Activated naive CD4-positive, alpha-beta T cell treated with anti-CD3 and anti-CD28 coated beads for 36 hours (primary cell): ENCODE measurements at regions of chr16 and their contacts with region 1.

Region 1: GRCh38 chr16:4550591-4550990 is 5.5 kb upstream of the C16orf96 start:
- DNase-seq: no peak
- H3K4me3 Mint-ChIP-seq: no peak overlapping the region
- H3K27ac Mint-ChIP-seq: no peak overlapping the region
- H3K4me1 Mint-ChIP-seq: peaks cover 5% of the 10 kb centered on the region
- H3K27me3 Mint-ChIP-seq: no peaks in the 10 kb centered on the region

Region 2: GRCh38 chr16:4450926-4451619 is 99.5 kb before region 1 on chr16:
- CTCF ChIA-PET with region 1: no interaction called
- intact Hi-C with region 1: no loop called
- DNase-seq: no peak
- H3K4me3 Mint-ChIP-seq: no peak overlapping the region
- H3K27ac Mint-ChIP-seq: peak overlapping the region; percentile 41
- H3K4me1 Mint-ChIP-seq: no peaks in the 10 kb centered on the region
- H3K27me3 Mint-ChIP-seq: no peaks in the 10 kb centered on the region

Region 3: DNA sequence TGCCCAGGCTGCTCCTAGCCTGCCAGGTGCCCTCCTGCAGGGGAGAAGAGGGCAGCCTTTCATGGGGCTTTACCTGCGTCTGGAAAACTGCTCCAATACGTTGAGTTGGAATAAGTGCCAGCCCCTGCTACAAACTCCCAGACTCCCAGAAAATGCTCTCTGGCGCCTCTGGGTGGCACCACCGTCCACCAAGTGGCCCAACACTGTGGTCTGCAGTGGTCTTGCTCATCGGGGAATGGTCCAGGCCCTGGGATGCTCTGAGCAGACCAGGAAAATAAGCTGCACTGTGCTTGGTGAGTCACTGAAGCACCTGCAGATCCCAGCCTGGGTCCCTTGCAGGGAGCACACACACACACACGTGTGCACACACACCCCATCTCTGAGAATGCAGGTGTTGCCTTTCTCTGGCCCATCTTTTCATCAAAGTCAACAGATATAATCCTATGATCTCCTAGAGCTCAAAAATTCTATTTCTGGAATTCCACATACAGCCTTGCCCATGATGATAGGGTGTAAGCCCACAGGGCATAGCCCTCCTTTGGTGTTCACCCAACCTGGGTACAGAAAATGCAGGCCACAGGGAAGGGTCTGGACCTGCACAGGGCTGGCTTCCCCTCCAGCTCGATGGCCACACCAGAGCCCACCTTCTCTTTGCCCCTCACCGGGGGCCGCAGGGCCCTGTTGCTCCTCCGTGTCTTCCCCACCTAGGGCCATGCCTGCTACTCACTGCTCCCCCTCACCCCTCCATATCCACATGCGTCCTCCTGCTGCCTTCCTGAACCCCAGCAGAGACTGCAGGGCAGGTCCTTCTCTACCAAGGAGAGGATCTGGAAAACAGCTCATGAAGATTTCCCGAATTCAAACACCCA is 32.5 kb before region 1 on chr16:
- CTCF ChIA-PET with region 1: interaction called, 7 read pairs
- intact Hi-C with region 1: loop called (anchors 1 kb)
- DNase-seq: no peak
- H3K4me3 Mint-ChIP-seq: no peak overlapping the region
- H3K27ac Mint-ChIP-seq: no peak overlapping the region
- H3K4me1 Mint-ChIP-seq: peaks cover 30% of the 10 kb centered on the region
- H3K27me3 Mint-ChIP-seq: no peaks in the 10 kb centered on the region

Region 4: DNA sequence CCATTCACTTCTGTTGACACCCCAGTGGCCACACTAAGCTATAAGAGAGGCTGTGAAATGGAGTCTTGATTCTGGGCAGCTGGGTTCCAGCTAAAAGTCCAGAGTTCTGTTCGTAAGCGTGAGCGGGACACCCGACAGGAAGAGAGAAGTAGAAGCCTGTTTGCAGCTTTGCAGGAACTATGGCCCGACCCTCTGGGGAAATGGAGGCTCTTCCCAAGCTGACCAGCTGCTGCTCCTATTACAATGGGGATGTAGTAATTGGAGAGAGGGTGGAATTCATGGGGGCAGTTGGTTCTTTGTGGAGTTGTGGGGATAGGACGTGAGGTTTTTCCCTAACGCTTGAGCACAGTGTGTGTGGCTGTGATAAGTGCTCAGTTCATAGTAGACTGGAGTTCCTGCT is 35.7 kb after region 1 on chr16:
- CTCF ChIA-PET with region 1: interaction called, 10 read pairs
- intact Hi-C with region 1: no loop called
- DNase-seq: no peak
- H3K4me3 Mint-ChIP-seq: no peak overlapping the region
- H3K27ac Mint-ChIP-seq: no peak overlapping the region
- H3K4me1 Mint-ChIP-seq: peaks cover 4% of the 10 kb centered on the region
- H3K27me3 Mint-ChIP-seq: peaks cover 3% of the 10 kb centered on the region